ENCODE measurements at regions of chr9 and their contacts with region 1.

Region 1: GRCh38 chr9:113657703-113658544 is 194.4 kb downstream of the RGS3 start:
- DNase-seq: peak; percentile 61 to 82 (median 69)
- H3K4me3 ChIP-seq: no peak overlapping the region
- H3K4me3 Mint-ChIP-seq: no peak overlapping the region
- H3K27ac ChIP-seq: no peak overlapping the region
- H3K27ac Mint-ChIP-seq: peak overlapping the region in 1 of 8 donors; percentile 6
- H3K4me1 ChIP-seq: no peaks in the 10 kb centered on the region
- H3K4me1 Mint-ChIP-seq: peaks cover 0 to 5% (median 3%) of the 10 kb centered on the region in 3 donors
- H3K27me3 ChIP-seq: peaks cover 6% of the 10 kb centered on the region
- H3K27me3 Mint-ChIP-seq: peaks cover 13 to 30% of the 10 kb centered on the region in 2 donors

Region 2: DNA sequence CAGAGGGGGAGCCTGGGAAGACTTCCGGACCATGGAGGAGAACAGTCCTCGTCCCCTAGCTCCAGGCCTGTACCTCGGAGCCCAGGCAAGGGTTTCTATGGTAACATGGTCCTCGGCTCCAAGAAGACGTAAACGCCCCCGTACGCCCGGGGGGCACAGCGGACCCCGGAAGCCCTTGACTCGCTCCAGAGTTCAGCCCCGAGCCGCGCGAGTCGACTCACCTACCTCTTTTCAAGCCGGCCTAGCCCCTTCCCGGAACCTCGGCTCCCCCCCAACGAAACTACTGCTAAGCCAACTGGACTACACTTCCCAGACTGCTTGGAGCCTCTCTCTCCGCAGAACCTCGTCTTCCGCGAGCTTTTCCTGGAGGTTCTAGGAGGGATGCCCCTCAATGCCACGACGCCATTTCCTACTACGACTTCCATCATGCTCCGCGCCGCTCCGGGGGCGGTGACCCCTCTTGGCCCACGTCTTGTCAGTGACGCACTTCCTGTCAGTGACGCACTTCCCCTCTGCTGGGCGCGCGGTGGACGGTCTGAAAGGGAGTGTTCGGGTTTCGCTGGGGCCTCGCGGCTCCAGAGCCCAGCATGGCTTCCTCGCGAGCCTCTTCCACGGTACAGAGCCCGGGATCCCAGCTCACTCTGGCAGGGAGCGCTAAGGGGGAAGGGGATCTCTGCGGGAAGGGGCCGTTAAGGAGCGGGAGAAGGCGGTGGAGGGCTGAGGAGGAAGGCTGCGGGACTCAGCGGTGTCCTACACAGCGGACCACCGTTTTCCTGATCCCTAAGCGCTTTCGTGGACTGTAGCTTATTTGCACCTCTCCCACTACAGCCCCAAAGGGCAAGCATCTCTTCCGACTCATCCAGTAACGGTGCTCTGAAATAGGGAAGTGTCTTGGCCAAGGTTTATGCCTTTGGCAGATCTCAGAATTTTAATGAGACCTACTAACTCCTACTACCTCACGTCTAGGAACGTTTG is 382.5 kb before region 1 on chr9 and contains the starts of genes CDC26 and PRPF4:
- CTCF ChIA-PET with region 1: interaction called, 67 read pairs
- POLR2A ChIA-PET with region 1: no interaction called
- DNase-seq: peak; percentile 93 to 97 (median 93)
- H3K4me3 ChIP-seq: peak within 1 kb of the TSS; percentile 92
- H3K4me3 Mint-ChIP-seq: no peak within 1 kb of the TSS
- H3K27ac ChIP-seq: peak within 1 kb of the TSS; percentile 95
- H3K27ac Mint-ChIP-seq: no peak within 1 kb of the TSS
- H3K4me1 ChIP-seq: peaks cover 23% of the 10 kb centered on the region
- H3K4me1 Mint-ChIP-seq: peaks cover 27 to 40% (median 37%) of the 10 kb centered on the region in 3 donors
- H3K27me3 ChIP-seq: no peaks in the 10 kb centered on the region
- H3K27me3 Mint-ChIP-seq: no peaks in the 10 kb centered on the region
- total RNA-seq, gene CDC26: 51.1 to 56.5 TPM
- total RNA-seq, gene PRPF4: 69.5 to 71.4 TPM

Region 3: DNA sequence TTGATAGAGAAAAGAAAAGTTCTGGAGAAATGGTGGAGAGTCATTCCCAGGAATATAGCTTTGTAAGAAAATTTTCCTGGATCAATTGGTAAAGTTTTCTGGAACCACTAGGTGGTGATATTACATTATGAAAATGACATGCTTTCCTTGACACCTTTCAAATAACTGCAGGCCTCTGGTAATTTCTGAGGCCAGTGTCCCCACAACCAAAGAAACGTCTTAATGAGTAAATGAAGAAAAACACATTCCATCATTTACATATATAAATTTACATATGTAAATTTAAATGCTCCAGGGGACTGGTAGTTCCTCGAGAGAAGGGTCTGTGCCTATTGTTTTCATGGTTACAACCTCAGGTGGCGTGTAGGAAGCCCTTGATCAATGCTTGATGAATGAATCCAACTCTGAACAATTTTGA is 211.6 kb before region 1 on chr9:
- CTCF ChIA-PET with region 1: interaction called, 141 read pairs
- POLR2A ChIA-PET with region 1: no interaction called
- DNase-seq: peak in 2 of 5 donors; percentile 34 to 40
- H3K4me3 ChIP-seq: no peak overlapping the region
- H3K4me3 Mint-ChIP-seq: no peak overlapping the region
- H3K27ac ChIP-seq: no peak overlapping the region
- H3K27ac Mint-ChIP-seq: no peak overlapping the region
- H3K4me1 ChIP-seq: no peaks in the 10 kb centered on the region
- H3K4me1 Mint-ChIP-seq: no peaks in the 10 kb centered on the region
- H3K27me3 ChIP-seq: no peaks in the 10 kb centered on the region
- H3K27me3 Mint-ChIP-seq: peaks cover 1 to 3% of the 10 kb centered on the region in 2 donors

Region 4: DNA sequence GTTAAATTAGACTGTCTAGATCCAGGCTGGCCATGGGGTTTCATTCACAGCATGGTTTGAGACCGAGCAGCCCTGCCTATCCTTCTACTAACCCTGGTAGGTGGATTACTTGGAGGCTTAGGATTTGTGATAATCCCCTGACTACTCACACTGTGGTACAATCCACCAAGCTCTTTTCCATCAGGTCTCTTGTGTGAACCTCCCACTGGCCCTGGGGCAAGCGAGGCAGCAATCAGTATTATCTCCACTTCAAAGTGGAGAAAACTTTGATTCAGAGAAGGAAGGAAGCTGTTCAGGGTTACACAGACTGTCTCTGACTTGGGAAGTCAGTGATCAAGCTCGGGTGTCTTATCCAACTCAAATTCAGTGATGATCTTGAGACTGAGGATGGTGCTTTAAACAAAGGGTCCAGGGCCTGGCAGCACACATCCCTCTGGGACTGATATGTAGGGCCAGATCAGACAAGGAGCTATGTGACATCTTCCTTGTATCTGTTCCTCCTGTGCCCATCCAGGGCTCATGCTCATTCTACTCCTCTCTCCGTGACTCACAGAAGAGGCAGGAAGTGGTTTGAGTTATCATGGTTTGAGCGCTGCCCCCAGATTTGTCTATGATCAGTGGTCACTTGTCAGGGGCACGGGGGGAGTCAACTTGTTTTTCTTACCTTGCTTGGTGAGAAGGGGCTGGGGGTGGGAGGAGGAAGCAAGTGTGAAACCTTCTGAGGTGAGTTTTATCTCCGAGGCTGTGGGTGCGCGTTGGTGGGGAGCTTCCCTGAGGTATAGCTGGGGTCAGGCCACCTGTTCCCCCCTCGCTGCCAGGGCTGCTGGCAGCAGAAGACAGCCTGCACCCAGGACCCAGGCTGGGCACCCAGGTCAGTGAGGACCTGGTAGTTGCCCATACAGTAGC is 145.8 kb before region 1 on chr9:
- CTCF ChIA-PET with region 1: interaction called, 14 read pairs
- POLR2A ChIA-PET with region 1: no interaction called
- DNase-seq: peak; percentile 62 to 89 (median 69)
- H3K4me3 ChIP-seq: peak overlapping the region; percentile 39
- H3K4me3 Mint-ChIP-seq: peak overlapping the region; percentile 39 to 76 (median 73)
- H3K27ac ChIP-seq: peak overlapping the region; percentile 43
- H3K27ac Mint-ChIP-seq: peak overlapping the region; percentile 89 to 98 (median 94)
- H3K4me1 ChIP-seq: peaks cover 64% of the 10 kb centered on the region
- H3K4me1 Mint-ChIP-seq: peaks cover 60 to 72% (median 64%) of the 10 kb centered on the region in 3 donors
- H3K27me3 ChIP-seq: no peaks in the 10 kb centered on the region
- H3K27me3 Mint-ChIP-seq: peaks cover 0 to 1% of the 10 kb centered on the region in 2 donors

Region 5: DNA sequence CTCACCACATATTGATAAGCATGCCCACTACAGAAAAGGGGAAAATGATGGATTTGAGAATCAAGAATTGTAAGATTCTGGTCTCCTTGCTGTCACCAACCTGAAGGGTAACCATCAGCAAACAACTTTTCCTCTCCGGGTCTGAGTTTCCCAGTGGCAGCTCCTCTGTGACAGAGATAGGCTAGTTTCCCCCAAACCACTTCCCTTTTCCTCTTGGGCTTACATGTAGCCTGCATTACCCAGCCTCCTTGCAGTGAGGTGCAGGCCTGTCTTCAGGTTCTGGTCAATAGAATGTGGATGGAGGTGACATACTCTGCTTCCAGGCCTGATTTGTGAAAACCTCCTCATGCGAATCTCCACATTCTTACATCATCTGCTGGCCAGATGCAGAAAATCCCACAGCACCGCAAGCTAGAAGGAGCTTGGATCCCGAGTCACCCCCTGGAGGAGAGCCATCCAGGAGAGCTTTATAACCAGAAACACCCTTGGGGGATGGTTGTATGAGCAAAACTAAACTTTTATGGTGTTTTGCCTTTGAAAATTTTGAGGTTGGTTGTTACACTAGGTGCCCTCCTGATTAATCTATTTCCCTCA is 11.7 kb after region 1 on chr9:
- CTCF ChIA-PET with region 1: interaction called, 10 read pairs
- POLR2A ChIA-PET with region 1: no interaction called
- DNase-seq: no peak
- H3K4me3 ChIP-seq: no peak overlapping the region
- H3K4me3 Mint-ChIP-seq: no peak overlapping the region
- H3K27ac ChIP-seq: no peak overlapping the region
- H3K27ac Mint-ChIP-seq: no peak overlapping the region
- H3K4me1 ChIP-seq: no peaks in the 10 kb centered on the region
- H3K4me1 Mint-ChIP-seq: no peaks in the 10 kb centered on the region
- H3K27me3 ChIP-seq: no peaks in the 10 kb centered on the region
- H3K27me3 Mint-ChIP-seq: peaks cover 14 to 21% of the 10 kb centered on the region in 2 donors

Measured in CD8-positive, alpha-beta memory T cell (primary cell).